B cell (primary cell): ENCODE measurements at regions of chr15 and their contacts with region 1.

Region 1: DNA sequence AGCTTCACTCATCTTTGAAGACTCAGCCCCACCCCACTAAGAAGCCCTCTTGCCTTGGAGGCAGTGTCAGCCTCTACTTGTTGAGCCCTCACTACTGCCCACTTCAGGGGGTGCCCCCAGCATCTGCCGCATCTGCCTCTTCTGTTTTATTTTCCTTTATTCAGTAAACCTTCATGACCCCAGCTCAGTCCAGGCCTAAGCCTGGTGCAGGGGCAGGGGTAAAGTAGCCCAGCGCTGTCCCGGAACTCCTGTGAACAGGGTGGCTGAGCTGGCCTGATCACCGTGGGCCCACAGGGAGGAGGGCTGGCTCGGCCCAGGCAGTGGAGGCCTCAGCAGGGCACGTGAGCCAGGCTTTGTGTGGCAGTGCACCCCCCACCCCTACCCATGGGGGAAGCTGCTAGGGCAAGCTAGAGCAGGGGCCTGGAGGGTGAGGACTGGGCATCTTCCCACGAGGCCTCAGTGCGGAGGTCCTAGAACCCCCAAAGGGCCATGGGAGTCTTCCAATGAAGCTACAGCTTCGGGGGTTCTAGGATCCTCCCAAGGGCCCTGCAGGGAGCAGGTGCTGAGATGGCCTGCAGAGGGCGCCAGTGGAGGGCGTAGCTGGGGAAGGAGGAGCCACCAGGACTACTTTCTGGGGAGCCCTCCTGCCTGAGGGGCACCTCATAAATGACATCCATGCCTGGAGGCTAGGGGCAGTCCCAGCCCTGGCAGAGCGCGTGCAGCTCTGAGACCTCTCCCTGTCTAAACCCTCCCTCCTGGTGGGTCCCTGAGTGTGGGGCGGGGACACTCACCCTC is 36.0 kb downstream of the TSPAN3 start:
- DNase-seq: peak; percentile 65
- ATAC-seq: peak; percentile 22
- H3K4me3 ChIP-seq: no peak overlapping the region
- H3K4me3 Mint-ChIP-seq: no peak overlapping the region
- H3K27ac ChIP-seq: peak overlapping the region; percentile 22 to 57
- H3K27ac Mint-ChIP-seq: peak overlapping the region; percentile 75
- H3K4me1 ChIP-seq: peaks cover 12 to 37% of the 10 kb centered on the region in 2 donors
- H3K4me1 Mint-ChIP-seq: peaks cover 18% of the 10 kb centered on the region
- H3K27me3 ChIP-seq: no peaks in the 10 kb centered on the region
- H3K27me3 Mint-ChIP-seq: no peaks in the 10 kb centered on the region
- CTCF ChIP-seq: peak; percentile 78

Region 2: GRCh38 chr15:76235186-76235826 is 799.6 kb before region 1 on chr15:
- CTCF ChIA-PET with region 1: interaction called, 3 read pairs
- POLR2A ChIA-PET with region 1: no interaction called
- intact Hi-C with region 1: loop called (anchors 5 kb)
- DNase-seq: peak; percentile 45
- ATAC-seq: peak; percentile 21
- H3K4me3 ChIP-seq: no peak overlapping the region
- H3K4me3 Mint-ChIP-seq: no peak overlapping the region
- H3K27ac ChIP-seq: no peak overlapping the region
- H3K27ac Mint-ChIP-seq: no peak overlapping the region
- H3K4me1 ChIP-seq: no peaks in the 10 kb centered on the region
- H3K4me1 Mint-ChIP-seq: no peaks in the 10 kb centered on the region
- H3K27me3 ChIP-seq: no peaks in the 10 kb centered on the region
- H3K27me3 Mint-ChIP-seq: no peaks in the 10 kb centered on the region
- CTCF ChIP-seq: peak; percentile 65

Region 3: DNA sequence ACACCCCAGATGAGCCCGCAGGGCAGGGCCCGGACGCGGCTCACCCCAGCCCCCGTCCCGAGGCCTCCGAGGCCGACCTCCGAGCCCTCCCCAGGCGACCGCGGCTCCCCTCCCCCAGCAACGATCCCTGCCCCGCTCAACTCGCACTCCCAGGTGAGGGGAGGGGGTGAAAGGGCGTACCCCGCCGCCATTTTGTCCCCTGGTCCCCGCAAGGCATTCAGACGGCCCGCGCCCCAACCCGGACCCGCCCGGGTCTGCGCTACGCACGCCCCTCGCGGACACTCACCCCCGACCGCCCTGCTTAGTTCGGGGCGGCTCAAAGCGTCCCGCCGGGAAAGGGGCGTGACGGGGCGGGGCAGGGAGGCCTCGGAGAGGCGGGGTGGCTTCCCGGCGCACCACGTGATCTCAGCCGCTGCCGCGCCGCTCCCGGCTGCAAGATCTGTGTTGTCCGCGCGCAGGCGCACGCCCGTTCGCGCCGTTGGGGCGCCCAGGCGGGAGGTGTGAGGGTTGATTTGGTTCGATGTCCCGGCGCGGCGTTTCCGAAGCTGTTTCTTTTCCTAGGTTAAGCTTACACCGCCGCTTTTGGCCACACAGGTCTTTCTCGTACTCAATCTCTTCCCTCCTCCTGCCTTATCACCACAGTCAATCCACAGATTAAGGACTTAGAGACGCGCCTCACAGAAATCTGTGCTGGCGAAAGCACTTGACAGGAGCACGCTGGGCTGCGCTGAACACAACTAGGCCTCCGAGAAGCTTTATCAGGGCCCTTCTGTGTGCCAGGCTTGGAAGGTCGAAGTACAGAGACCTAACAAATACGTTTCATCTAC is 129.7 kb before region 1 on chr15 and contains the start of gene SCAPER:
- CTCF ChIA-PET with region 1: interaction called, 33 read pairs
- POLR2A ChIA-PET with region 1: no interaction called
- intact Hi-C with region 1: loop called (anchors 2 kb)
- DNase-seq: peak; percentile 94
- ATAC-seq: peak; percentile 88
- H3K4me3 ChIP-seq: peak within 1 kb of the TSS; percentile 76 to 93 (median 80)
- H3K4me3 Mint-ChIP-seq: peak within 1 kb of the TSS; percentile 91
- H3K27ac ChIP-seq: peak within 1 kb of the TSS; percentile 82 to 92
- H3K27ac Mint-ChIP-seq: peak within 1 kb of the TSS; percentile 89
- H3K4me1 ChIP-seq: peaks cover 32 to 36% of the 10 kb centered on the region in 2 donors
- H3K4me1 Mint-ChIP-seq: peaks cover 52% of the 10 kb centered on the region
- H3K27me3 ChIP-seq: no peaks in the 10 kb centered on the region
- H3K27me3 Mint-ChIP-seq: no peaks in the 10 kb centered on the region
- CTCF ChIP-seq: no peak
- total RNA-seq, gene SCAPER: 59.5 and 61.6 TPM in 2 replicates

Region 4: GRCh38 chr15:76941636-76942035 is 93.3 kb before region 1 on chr15:
- CTCF ChIA-PET with region 1: interaction called, 13 read pairs
- POLR2A ChIA-PET with region 1: no interaction called
- intact Hi-C with region 1: no loop called
- DNase-seq: no peak
- ATAC-seq: no peak
- H3K4me3 ChIP-seq: no peak overlapping the region
- H3K4me3 Mint-ChIP-seq: no peak overlapping the region
- H3K27ac ChIP-seq: no peak overlapping the region
- H3K27ac Mint-ChIP-seq: no peak overlapping the region
- H3K4me1 ChIP-seq: peaks cover 3 to 9% of the 10 kb centered on the region in 2 donors
- H3K4me1 Mint-ChIP-seq: peaks cover 14% of the 10 kb centered on the region
- H3K27me3 ChIP-seq: no peaks in the 10 kb centered on the region
- H3K27me3 Mint-ChIP-seq: no peaks in the 10 kb centered on the region
- CTCF ChIP-seq: no peak

Region 5: GRCh38 chr15:76973362-76973743 is 61.5 kb before region 1 on chr15:
- CTCF ChIA-PET with region 1: interaction called, 67 read pairs
- POLR2A ChIA-PET with region 1: no interaction called
- intact Hi-C with region 1: loop called (anchors 1 kb)
- DNase-seq: peak; percentile 63
- ATAC-seq: no peak
- H3K4me3 ChIP-seq: no peak overlapping the region
- H3K4me3 Mint-ChIP-seq: no peak overlapping the region
- H3K27ac ChIP-seq: no peak overlapping the region
- H3K27ac Mint-ChIP-seq: no peak overlapping the region
- H3K4me1 ChIP-seq: peaks cover 3 to 6% of the 10 kb centered on the region in 2 donors
- H3K4me1 Mint-ChIP-seq: peaks cover 3% of the 10 kb centered on the region
- H3K27me3 ChIP-seq: no peaks in the 10 kb centered on the region
- H3K27me3 Mint-ChIP-seq: no peaks in the 10 kb centered on the region
- CTCF ChIP-seq: peak; percentile 48

Region 6: GRCh38 chr15:76994971-76995945 is 39.6 kb before region 1 on chr15 and contains the start of gene PSTPIP1:
- CTCF ChIA-PET with region 1: interaction called, 12 read pairs
- POLR2A ChIA-PET with region 1: no interaction called
- intact Hi-C with region 1: no loop called
- DNase-seq: peak; percentile 80
- ATAC-seq: peak; percentile 89
- H3K4me3 ChIP-seq: peak within 1 kb of the TSS; percentile 74 to 86 (median 79)
- H3K4me3 Mint-ChIP-seq: peak within 1 kb of the TSS; percentile 99
- H3K27ac ChIP-seq: peak within 1 kb of the TSS; percentile 79 to 81
- H3K27ac Mint-ChIP-seq: peak within 1 kb of the TSS; percentile 100
- H3K4me1 ChIP-seq: peaks cover 38 to 57% of the 10 kb centered on the region in 2 donors
- H3K4me1 Mint-ChIP-seq: peaks cover 51% of the 10 kb centered on the region
- H3K27me3 ChIP-seq: no peaks in the 10 kb centered on the region
- H3K27me3 Mint-ChIP-seq: no peaks in the 10 kb centered on the region
- CTCF ChIP-seq: no peak
- total RNA-seq, gene PSTPIP1: 67.1 and 69.0 TPM in 2 replicates

Region 7: GRCh38 chr15:77070495-77071304 is 35.8 kb after region 1 on chr15 and contains the start of gene TSPAN3:
- CTCF ChIA-PET with region 1: interaction called, 7 read pairs
- POLR2A ChIA-PET with region 1: no interaction called
- intact Hi-C with region 1: loop called (anchors 5 kb)
- DNase-seq: peak; percentile 95
- ATAC-seq: peak; percentile 94
- H3K4me3 ChIP-seq: peak within 1 kb of the TSS; percentile 69 to 92 (median 79)
- H3K4me3 Mint-ChIP-seq: peak within 1 kb of the TSS; percentile 87
- H3K27ac ChIP-seq: peak within 1 kb of the TSS; percentile 71 to 84
- H3K27ac Mint-ChIP-seq: peak within 1 kb of the TSS; percentile 94
- H3K4me1 ChIP-seq: peaks cover 47 to 49% of the 10 kb centered on the region in 2 donors
- H3K4me1 Mint-ChIP-seq: peaks cover 52% of the 10 kb centered on the region
- H3K27me3 ChIP-seq: no peaks in the 10 kb centered on the region
- H3K27me3 Mint-ChIP-seq: no peaks in the 10 kb centered on the region
- CTCF ChIP-seq: no peak
- total RNA-seq, gene TSPAN3: 109 TPM in 2 replicates

Region 8: DNA sequence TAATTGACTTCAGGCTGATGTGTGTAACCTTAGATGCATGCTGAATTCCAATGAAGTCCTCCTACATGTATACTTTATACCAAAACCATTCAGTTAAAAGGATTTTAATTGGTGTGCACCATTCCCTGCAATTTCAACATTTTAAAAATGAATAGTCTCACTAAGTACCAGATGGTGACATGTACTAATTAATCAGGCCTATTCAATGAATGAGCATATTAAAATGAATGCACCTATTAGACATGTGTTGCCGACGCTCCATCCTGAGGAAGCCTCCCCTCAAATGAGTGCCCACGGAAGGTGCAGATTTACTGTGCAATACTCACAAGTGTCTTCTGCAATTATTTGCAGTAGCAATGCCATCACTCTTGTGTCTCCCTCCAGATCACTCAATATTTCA is 160.7 kb after region 1 on chr15:
- CTCF ChIA-PET with region 1: no interaction called
- POLR2A ChIA-PET with region 1: no interaction called
- intact Hi-C with region 1: no loop called
- DNase-seq: no peak
- ATAC-seq: no peak
- H3K4me3 ChIP-seq: no peak overlapping the region
- H3K4me3 Mint-ChIP-seq: no peak overlapping the region
- H3K27ac ChIP-seq: no peak overlapping the region
- H3K27ac Mint-ChIP-seq: no peak overlapping the region
- H3K4me1 ChIP-seq: peaks cover 4 to 5% of the 10 kb centered on the region in 2 donors
- H3K4me1 Mint-ChIP-seq: peaks cover 8% of the 10 kb centered on the region
- H3K27me3 ChIP-seq: no peaks in the 10 kb centered on the region
- H3K27me3 Mint-ChIP-seq: no peaks in the 10 kb centered on the region
- CTCF ChIP-seq: no peak